ENCODE measurements at regions of chr6 and their contacts with region 1.

Region 1: GRCh38 chr6:28311139-28311823 is 24.7 kb downstream of the ZSCAN31 start:
- DNase-seq: no peak
- ATAC-seq: no peak; the same call in 1 of the 2 replicates
- H3K4me3 Mint-ChIP-seq: no peak overlapping the region
- H3K27ac Mint-ChIP-seq: peak overlapping the region; percentile 58; the same call in 1 of the 2 replicates
- H3K4me1 Mint-ChIP-seq: peaks cover 23% of the 10 kb centered on the region
- H3K27me3 Mint-ChIP-seq: no peaks in the 10 kb centered on the region
- CTCF ChIP-seq: no peak

Region 2: DNA sequence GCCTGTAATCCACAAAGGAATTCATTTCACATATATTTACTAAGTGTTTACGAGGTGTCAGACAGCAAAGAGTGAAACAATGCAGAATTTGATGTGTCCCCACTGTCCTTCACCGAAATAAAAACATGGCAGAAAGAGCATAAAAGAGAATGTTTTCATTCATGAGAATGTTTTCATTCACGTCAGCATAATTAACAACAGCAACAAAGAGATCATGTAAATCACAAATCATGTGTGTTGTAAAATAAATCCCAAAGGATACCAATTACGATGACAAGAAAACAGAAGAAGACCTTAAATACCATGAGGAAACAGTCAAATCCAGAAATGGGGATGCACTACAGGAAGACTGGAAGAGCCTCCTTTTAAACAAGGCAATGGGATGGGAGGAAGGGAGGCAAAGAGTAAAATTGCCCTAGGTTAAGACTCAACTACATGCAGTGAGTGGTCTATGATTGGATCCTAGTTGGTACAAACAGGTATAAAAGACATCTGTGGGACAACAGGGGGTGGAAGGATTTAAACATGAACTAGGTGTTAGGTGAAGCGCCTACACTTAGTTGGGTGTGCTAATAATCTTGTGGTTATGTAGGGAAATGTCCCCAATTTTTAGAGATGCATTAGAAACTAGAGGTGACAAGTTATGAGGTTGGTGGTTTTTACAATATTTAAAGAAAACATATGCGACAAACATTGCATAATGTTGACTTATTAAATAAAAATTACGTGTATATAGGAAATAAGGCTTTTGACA is 23.2 kb after region 1 on chr6:
- CTCF ChIA-PET with region 1: no interaction called
- POLR2A ChIA-PET with region 1: no interaction called
- DNase-seq: no peak
- ATAC-seq: no peak
- H3K4me3 Mint-ChIP-seq: no peak overlapping the region
- H3K27ac Mint-ChIP-seq: no peak overlapping the region; the same call in 1 of the 2 replicates
- H3K4me1 Mint-ChIP-seq: peaks cover 9% of the 10 kb centered on the region
- H3K27me3 Mint-ChIP-seq: no peaks in the 10 kb centered on the region
- CTCF ChIP-seq: no peak

Region 3: GRCh38 chr6:28565823-28566526 is 254.7 kb after region 1 on chr6:
- CTCF ChIA-PET with region 1: no interaction called
- POLR2A ChIA-PET with region 1: interaction called, 10 read pairs
- DNase-seq: no peak
- ATAC-seq: no peak
- H3K4me3 Mint-ChIP-seq: no peak overlapping the region
- H3K27ac Mint-ChIP-seq: no peak overlapping the region
- H3K4me1 Mint-ChIP-seq: no peaks in the 10 kb centered on the region
- H3K27me3 Mint-ChIP-seq: peaks cover 9% of the 10 kb centered on the region
- CTCF ChIP-seq: no peak